ENCODE measurements at regions of chr17 and their contacts with region 1.

Region 1: DNA sequence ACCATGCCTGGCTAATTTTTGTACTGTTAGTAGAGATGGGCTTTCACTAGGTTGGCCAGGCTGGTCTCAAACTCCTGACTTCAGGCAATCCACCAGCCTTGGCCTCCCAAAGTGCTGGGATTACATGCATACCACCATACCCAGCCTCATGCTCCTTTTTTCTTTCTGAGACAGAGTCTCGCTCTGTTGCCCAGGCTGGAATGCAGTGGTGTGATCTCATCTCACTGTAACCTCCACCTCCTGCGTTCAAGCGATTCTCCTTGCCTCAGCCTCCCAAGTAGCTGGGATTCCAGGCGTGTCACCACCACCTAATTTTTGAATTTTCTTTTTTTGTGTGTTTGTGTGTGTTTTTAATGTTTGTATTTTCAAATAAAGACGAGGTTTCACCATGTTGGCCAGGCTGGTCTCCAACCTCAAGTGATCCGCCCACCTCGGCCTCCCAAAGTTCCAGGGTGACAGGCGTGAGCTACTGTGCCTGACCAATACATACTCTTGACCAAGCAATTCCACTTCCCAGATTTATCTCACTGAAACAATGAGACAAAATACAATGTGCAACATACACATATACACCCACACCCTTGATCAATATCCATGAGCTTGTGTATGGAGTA is 5.0 kb downstream of the GRB2 start:
- DNase-seq: no peak
- ATAC-seq: no peak
- H3K4me3 Mint-ChIP-seq: no peak overlapping the region
- H3K27ac Mint-ChIP-seq: peak overlapping the region; percentile 34
- H3K4me1 Mint-ChIP-seq: peaks cover 54% of the 10 kb centered on the region
- H3K27me3 Mint-ChIP-seq: no peaks in the 10 kb centered on the region
- CTCF ChIP-seq: no peak

Region 2: GRCh38 chr17:75338335-75338734 is 62.1 kb before region 1 on chr17:
- CTCF ChIA-PET with region 1: interaction called, 15 read pairs
- POLR2A ChIA-PET with region 1: interaction called, 8 read pairs
- intact Hi-C with region 1: no loop called
- DNase-seq: no peak
- ATAC-seq: peak; percentile 26
- H3K4me3 Mint-ChIP-seq: peak overlapping the region; percentile 56
- H3K27ac Mint-ChIP-seq: peak overlapping the region; percentile 90
- H3K4me1 Mint-ChIP-seq: peaks cover 72% of the 10 kb centered on the region
- H3K27me3 Mint-ChIP-seq: no peaks in the 10 kb centered on the region
- CTCF ChIP-seq: no peak

Region 3: DNA sequence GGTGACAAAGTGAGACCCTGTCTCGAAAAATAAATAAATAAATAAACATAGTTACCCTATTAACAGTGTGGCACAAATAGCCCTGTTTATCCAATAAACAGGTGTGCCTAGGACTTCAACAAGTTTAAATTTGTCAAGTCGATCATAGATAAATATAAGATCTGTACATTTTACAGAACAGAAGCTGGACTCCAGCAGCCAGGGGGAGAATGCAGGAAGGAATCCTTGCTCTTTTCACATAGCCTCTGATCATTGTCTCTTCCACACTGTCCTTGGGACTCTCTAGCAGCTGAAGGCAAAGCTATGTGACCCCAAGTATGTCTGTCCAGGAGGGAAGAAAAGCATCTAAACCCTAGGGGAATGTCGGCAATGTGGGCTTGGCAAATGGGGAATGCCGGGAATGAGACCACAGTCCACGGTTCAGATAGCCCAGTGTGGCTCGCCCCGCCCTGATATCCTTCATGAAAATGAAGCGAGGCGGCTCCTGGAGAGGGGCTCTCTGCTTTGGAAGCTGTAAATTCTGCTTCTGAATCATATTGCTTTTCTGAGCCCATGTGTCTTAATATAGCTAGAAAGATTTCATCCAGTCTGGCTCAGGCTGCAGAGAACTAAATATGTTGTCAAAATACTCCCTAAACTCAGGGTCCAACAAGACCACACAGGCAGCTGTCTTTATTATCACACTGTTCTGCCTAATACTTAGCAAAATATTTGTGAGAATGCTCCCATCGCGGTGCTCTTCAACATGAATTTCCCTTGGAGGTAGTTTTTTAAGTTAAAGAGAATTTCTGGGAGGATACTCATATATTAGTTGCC is 29.9 kb after region 1 on chr17:
- CTCF ChIA-PET with region 1: no interaction called
- POLR2A ChIA-PET with region 1: no interaction called
- intact Hi-C with region 1: no loop called
- DNase-seq: no peak
- ATAC-seq: no peak
- H3K4me3 Mint-ChIP-seq: no peak overlapping the region
- H3K27ac Mint-ChIP-seq: no peak overlapping the region
- H3K4me1 Mint-ChIP-seq: peaks cover 11% of the 10 kb centered on the region
- H3K27me3 Mint-ChIP-seq: no peaks in the 10 kb centered on the region
- CTCF ChIP-seq: no peak

Region 4: GRCh38 chr17:75476271-75476671 is 75.8 kb after region 1 on chr17:
- CTCF ChIA-PET with region 1: no interaction called
- POLR2A ChIA-PET with region 1: no interaction called
- intact Hi-C with region 1: no loop called
- DNase-seq: no peak
- ATAC-seq: no peak
- H3K4me3 Mint-ChIP-seq: no peak overlapping the region
- H3K27ac Mint-ChIP-seq: no peak overlapping the region
- H3K4me1 Mint-ChIP-seq: no peaks in the 10 kb centered on the region
- H3K27me3 Mint-ChIP-seq: no peaks in the 10 kb centered on the region
- CTCF ChIP-seq: no peak